MCF 10A (cell line): ENCODE measurements at regions of chr5 and their contacts with region 1.

Region 1: DNA sequence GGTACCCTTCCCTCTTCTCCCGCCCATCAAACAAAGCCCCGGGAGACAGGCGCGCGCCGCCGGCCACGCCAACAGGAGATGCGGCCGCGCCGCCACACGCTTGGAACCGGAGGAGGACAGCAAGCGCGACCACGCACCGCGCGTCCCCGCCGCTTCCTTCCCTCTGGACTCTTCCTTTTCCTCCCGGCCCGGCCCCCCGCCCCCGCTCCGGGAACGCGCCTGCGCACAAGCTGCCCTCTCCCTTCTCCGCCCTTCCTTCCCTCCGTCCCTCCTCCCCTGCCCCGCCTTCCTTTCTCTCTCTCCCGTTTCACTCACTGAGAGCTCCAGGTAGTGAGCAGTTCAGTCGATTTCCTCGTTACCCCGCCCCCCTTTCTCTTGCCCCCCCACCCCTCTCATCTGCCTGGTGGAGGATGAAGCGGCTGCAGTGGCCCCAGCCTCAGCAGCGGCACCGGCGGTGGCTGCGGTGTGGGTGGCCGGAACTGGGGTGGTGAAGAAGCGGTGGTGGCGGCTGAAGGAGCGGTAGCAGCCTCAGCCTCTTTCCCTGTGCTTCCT is at the start of gene RASA1:
- DNase-seq: peak; percentile 94
- H3K4me3 Mint-ChIP-seq: peak within 1 kb of the TSS; percentile 95
- H3K27ac Mint-ChIP-seq: peak within 1 kb of the TSS; percentile 92
- H3K4me1 Mint-ChIP-seq: peaks cover 10% of the 10 kb centered on the region
- H3K27me3 Mint-ChIP-seq: no peaks in the 10 kb centered on the region
- CTCF ChIP-seq: no peak
- total RNA-seq, gene RASA1: 53.8 and 68.6 TPM in 2 replicates

Region 2: DNA sequence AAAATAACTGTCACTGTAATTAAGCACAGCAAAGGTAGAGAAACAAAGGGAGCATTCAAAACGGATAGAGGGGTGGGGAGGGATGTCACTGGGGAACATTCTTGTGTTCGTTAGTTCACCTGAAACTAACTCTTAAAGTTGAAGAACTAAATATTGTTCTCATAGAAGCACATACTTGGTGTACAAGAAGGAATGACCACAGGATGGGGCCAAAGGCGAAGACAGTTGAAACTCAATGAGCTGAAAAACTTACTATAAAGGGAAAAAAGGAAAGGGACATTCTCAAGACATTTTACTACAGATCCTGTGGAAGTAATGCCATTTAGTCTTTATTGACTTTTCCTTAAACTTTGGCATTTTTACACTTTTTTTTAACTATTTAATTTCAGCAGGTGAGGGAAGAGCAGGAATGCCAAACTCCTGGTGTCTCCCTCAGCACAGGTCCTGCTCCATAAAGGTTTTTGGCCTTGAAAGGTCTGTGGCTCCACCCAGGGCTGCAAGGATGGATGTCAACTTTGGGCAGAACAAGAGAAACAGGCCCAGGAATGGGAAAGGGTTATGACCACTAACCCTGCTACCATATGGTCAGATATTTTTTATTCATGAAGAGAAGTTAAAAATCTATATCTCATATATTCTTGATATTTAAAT is 197.6 kb before region 1 on chr5:
- CTCF ChIA-PET with region 1: interaction called, 3 read pairs
- POLR2A ChIA-PET with region 1: interaction called, 14 read pairs
- intact Hi-C with region 1: loop called (anchors 1 kb)
- DNase-seq: peak; percentile 65
- H3K4me3 Mint-ChIP-seq: no peak overlapping the region
- H3K27ac Mint-ChIP-seq: no peak overlapping the region
- H3K4me1 Mint-ChIP-seq: peaks cover 10% of the 10 kb centered on the region
- H3K27me3 Mint-ChIP-seq: no peaks in the 10 kb centered on the region
- CTCF ChIP-seq: peak; percentile 52

Region 3: DNA sequence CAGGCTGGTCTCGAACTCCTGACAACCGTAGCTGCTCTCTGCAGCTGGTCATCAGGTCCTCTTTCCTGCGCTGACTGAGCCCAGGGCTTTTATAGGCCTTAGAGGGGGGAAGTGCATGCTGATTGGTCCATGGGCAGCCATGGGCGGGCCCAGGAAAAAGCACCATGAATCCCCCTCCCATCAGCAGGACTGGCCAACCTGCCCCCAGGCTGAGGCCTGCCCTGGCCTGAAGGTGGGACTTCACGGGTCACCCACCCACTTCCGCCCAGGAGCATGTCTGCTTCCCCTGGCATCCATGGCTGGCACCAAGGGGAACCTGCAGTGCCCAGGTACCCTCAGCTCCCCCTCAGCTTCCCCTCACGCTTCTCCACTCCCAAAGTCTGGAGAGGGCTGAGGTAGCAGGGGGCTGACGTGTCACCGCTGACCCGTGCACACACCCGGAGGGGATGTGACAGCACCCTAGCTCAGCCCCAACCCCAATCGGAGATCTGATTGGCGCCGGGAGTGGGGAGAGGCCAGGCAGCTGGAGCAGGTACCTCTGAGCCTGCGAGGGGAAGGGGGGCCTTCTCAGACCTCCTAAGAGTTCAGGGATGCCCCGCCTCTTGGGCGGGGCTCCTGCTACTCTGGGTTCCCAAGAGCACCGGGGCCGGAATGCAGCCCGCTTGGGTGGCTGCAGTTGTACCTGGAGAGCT is 15.9 kb before region 1 on chr5:
- CTCF ChIA-PET with region 1: no interaction called
- POLR2A ChIA-PET with region 1: interaction called, 13 read pairs
- intact Hi-C with region 1: no loop called
- DNase-seq: no peak
- H3K4me3 Mint-ChIP-seq: no peak overlapping the region
- H3K27ac Mint-ChIP-seq: no peak overlapping the region
- H3K4me1 Mint-ChIP-seq: no peaks in the 10 kb centered on the region
- H3K27me3 Mint-ChIP-seq: no peaks in the 10 kb centered on the region
- CTCF ChIP-seq: no peak

Region 4: DNA sequence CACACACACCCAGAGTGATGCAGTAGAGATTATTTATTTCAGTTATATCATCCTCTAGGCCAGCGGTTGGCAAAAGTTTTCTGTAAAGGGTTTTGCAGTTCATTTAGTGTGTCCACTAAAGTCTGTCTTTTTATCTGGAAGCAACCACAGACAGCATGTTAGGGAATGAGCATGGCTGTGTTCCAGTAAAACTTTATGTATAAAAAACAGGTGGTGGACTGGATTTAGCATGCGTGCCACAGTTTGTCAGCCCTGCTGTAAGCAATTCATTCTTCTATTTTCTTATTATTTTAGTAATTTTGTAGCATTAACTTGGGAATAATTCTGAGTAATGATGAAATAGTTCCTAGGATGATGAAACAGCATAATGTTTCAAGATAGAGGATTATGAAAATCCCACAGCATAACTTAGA is 93.4 kb after region 1 on chr5:
- CTCF ChIA-PET with region 1: no interaction called
- POLR2A ChIA-PET with region 1: no interaction called
- intact Hi-C with region 1: loop called (anchors 5 kb)
- DNase-seq: peak; percentile 8
- H3K4me3 Mint-ChIP-seq: no peak overlapping the region
- H3K27ac Mint-ChIP-seq: peak overlapping the region; percentile 57
- H3K4me1 Mint-ChIP-seq: peaks cover 11% of the 10 kb centered on the region
- H3K27me3 Mint-ChIP-seq: no peaks in the 10 kb centered on the region
- CTCF ChIP-seq: no peak

Region 5: GRCh38 chr5:87412630-87413342 is 145.1 kb after region 1 on chr5 and contains the start of gene CCNH:
- CTCF ChIA-PET with region 1: no interaction called
- POLR2A ChIA-PET with region 1: interaction called, 18 read pairs
- intact Hi-C with region 1: no loop called
- DNase-seq: peak; percentile 99
- H3K4me3 Mint-ChIP-seq: peak within 1 kb of the TSS; percentile 85
- H3K27ac Mint-ChIP-seq: peak within 1 kb of the TSS; percentile 95
- H3K4me1 Mint-ChIP-seq: peaks cover 20% of the 10 kb centered on the region
- H3K27me3 Mint-ChIP-seq: no peaks in the 10 kb centered on the region
- CTCF ChIP-seq: no peak
- total RNA-seq, gene CCNH: 51.5 and 56.9 TPM in 2 replicates